Activated naive CD4-positive, alpha-beta T cell treated with anti-CD3 and anti-CD28 coated beads for 36 hours (primary cell): ENCODE measurements at regions of chr17 and their contacts with region 1.

Region 1: DNA sequence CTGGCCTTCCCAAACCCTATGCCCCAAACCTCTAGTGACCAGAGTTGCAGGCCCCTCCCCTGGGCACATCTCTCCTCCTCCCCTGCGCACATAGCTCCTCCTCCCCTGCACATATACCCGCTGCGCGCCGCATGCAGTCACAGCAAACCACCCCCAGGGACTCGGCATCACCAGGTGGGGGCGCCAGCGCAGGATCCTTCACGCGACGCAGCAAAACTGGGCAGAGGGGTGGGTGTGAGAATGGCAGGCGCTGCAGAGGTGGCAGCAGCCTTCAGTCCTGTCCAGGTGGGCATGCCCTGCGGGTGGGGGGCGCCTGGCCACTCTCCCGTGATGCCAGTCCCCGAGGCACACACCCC is 5.6 kb downstream of the CORO6 start:
- DNase-seq: peak; percentile 97
- H3K4me3 Mint-ChIP-seq: peak overlapping the region; percentile 81
- H3K27ac Mint-ChIP-seq: peak overlapping the region; percentile 80
- H3K4me1 Mint-ChIP-seq: peaks cover 48% of the 10 kb centered on the region
- H3K27me3 Mint-ChIP-seq: peaks cover 9% of the 10 kb centered on the region

Region 2: GRCh38 chr17:29369831-29370735 is 247.0 kb before region 1 on chr17:
- CTCF ChIA-PET with region 1: interaction called, 10 read pairs
- intact Hi-C with region 1: loop called (anchors 1 kb)
- DNase-seq: peak; percentile 59
- H3K4me3 Mint-ChIP-seq: no peak overlapping the region
- H3K27ac Mint-ChIP-seq: no peak overlapping the region
- H3K4me1 Mint-ChIP-seq: no peaks in the 10 kb centered on the region
- H3K27me3 Mint-ChIP-seq: no peaks in the 10 kb centered on the region

Region 3: DNA sequence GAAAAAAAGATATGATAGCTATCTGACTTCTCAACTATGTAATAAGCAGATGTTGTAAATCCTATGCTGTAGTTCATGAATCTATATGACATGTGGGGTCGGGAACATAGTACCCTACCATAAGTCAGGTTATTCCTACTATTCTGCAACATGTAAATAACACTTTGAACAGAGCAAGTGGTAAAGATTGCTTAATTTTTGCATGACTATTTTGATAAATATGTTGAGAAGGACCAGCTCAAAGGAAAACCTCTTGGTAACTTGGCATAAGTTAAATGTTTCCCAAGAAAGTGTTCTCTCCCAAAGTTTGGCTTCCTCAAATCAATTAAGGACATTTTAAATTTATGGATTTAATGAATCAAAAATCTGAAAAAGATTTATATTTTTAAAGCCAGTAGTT is 112.4 kb before region 1 on chr17:
- CTCF ChIA-PET with region 1: no interaction called
- intact Hi-C with region 1: no loop called
- DNase-seq: no peak
- H3K4me3 Mint-ChIP-seq: no peak overlapping the region
- H3K27ac Mint-ChIP-seq: no peak overlapping the region
- H3K4me1 Mint-ChIP-seq: no peaks in the 10 kb centered on the region
- H3K27me3 Mint-ChIP-seq: no peaks in the 10 kb centered on the region

Region 4: DNA sequence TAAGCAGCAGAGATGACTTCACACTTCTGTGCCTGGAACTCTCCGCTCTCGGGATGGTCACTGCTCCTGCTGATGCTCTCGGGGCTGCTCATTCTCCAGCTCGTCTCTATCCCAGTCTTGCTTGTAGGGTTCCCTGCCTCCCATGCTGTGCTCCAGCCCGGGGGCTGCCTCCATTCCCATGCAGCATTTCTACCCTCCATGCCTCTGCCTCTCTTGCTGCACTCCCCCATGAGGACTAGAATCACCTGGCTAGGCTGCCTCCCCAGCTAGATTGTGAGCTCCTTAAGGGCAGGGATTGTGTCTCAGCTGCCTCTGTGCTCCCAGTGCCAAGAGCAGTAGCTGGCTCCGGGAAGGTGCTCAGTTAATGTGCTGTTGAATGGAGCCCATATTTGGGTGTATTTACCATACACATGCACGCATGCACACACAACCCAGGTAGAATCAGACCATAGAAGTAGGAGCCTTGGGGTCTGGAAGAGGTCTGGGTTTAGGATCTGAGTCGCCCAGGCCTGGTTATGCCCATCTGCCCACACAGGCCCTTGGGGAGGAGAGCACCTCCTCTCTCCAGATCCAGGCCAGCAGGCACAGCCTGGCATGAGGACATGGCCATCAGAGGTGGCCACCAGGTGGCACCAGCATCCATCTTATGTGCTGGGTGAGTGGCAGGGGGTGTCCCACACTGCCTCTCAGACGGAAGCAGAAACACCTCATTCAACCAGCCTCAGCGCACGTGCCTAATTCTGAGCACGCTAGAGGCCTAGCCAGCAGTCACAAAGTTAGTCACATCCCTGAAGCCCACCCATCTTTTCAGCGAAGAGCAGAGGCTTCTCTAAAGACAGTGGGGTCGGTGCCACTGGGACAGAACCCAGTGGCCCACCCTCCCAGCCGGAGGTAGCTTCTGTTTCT is 37.0 kb before region 1 on chr17:
- CTCF ChIA-PET with region 1: interaction called, 29 read pairs
- intact Hi-C with region 1: loop called (anchors 1 kb)
- DNase-seq: peak; percentile 96
- H3K4me3 Mint-ChIP-seq: no peak overlapping the region
- H3K27ac Mint-ChIP-seq: peak overlapping the region; percentile 77
- H3K4me1 Mint-ChIP-seq: peaks cover 24% of the 10 kb centered on the region
- H3K27me3 Mint-ChIP-seq: no peaks in the 10 kb centered on the region

Region 5: GRCh38 chr17:29699283-29699682 is 82.2 kb after region 1 on chr17:
- CTCF ChIA-PET with region 1: interaction called, 14 read pairs
- intact Hi-C with region 1: no loop called
- DNase-seq: no peak
- H3K4me3 Mint-ChIP-seq: no peak overlapping the region
- H3K27ac Mint-ChIP-seq: no peak overlapping the region
- H3K4me1 Mint-ChIP-seq: peaks cover 18% of the 10 kb centered on the region
- H3K27me3 Mint-ChIP-seq: no peaks in the 10 kb centered on the region

Region 6: DNA sequence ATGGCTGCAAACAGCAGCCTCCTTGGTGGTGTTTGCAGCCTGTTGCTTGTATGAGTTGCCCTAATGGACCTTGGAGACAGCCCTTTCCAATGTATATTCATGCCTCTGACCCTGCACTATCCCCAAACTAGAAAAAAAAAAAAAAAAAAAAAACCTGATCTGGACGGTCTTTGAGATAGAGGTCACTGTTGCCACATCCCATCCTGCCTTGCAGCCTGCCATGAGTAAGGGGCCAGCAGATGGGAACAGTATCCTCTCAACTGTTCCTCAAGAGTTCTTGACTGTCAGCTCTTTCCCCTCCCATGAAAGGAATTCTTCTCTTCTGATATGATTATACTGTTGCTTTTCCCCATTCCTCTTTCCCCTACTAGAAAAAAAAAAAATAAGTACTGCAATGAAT is 160.6 kb after region 1 on chr17:
- CTCF ChIA-PET with region 1: interaction called, 54 read pairs
- intact Hi-C with region 1: loop called (anchors 1 kb)
- DNase-seq: no peak
- H3K4me3 Mint-ChIP-seq: no peak overlapping the region
- H3K27ac Mint-ChIP-seq: no peak overlapping the region
- H3K4me1 Mint-ChIP-seq: peaks cover 5% of the 10 kb centered on the region
- H3K27me3 Mint-ChIP-seq: no peaks in the 10 kb centered on the region